ENCODE measurements at regions of chr15 and their contacts with region 1.

Region 1: DNA sequence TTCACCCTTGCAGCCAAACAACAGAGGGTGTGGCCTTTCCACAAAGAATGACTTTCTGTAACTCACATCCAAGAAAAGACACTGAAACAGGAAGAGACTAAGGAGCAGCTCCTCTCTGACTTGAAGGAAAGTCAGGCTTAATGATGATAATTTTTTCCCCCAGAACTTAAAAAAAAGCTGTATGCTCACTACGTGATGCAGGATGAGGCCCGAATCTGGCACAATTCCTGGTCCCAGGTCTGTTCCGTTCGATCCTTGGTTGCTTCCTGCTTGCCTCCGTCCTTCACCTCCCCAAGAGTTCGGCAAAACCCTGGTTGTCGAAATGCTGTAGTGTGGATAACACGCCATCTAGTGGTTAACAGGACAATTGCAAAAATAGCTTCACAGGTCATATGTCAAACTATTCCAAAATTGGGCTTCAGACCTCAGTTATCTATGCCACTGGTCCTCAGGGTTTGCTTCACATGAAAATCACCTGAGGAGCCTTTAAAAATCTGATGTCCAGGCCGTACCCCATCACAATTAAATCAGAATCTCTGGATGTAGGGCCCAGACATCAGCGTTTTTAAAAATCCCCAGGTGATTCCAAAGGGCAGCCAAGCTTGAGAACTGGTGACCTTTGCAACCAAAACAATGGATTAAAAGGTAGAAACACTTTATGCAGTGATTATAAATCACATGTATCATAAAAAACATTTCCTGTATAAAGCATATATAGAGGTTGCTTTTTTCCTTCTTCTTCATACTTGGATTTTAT is 28.1 kb upstream of the SYNM start:
- DNase-seq: no peak
- H3K4me3 ChIP-seq: peak overlapping the region in 3 of 4 donors; percentile 33 to 53 (median 38)
- H3K27ac ChIP-seq: peak overlapping the region in 2 of 4 donors; percentile 61 to 71
- H3K4me1 ChIP-seq: peaks cover 0 to 8% (median 0%) of the 10 kb centered on the region in 3 donors
- H3K27me3 ChIP-seq: no peaks in the 10 kb centered on the region
- CTCF ChIP-seq: peak; percentile 72 to 92 (median 86)
- POLR2A ChIP-seq: no peak

Region 2: GRCh38 chr15:98518823-98519561 is 557.7 kb before region 1 on chr15:
- intact Hi-C with region 1: loop called (anchors 10 kb)
- DNase-seq: no peak
- H3K4me3 ChIP-seq: no peak overlapping the region
- H3K27ac ChIP-seq: no peak overlapping the region
- H3K4me1 ChIP-seq: peaks cover 0 to 8% (median 0%) of the 10 kb centered on the region in 3 donors
- H3K27me3 ChIP-seq: no peaks in the 10 kb centered on the region
- CTCF ChIP-seq: peak; percentile 70 to 90 (median 80)
- POLR2A ChIP-seq: no peak

Region 3: DNA sequence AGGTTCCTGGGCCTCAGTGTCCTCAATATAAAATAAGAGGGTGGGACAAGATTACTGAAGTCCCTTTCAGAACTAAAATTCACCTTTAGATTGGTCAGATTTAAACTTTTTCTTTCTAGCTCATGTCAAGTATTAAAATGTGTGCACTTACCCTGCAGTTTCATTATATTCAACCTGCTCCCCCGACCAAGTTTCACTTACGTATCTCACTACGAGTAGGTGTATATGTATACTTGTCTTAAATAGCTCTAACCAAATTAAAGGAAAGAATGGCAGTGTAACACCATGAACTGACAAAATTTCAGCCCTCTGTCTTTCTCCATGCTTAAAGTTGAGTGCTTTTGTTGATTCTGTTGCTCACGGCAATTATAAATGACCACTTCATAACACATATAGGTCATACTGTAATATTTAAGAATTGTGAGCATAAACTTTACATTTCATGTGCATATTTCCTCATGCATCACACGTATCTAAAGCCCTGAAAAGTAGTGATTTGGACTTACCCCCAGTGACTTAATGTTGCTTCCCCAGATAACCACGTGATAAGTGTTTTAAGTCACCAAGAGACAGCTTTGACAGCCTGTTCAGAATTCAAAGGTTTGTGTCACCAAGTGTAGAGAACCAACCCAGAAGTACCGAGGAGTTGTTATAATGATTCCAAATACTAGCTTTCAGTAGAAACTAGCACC is 139.2 kb before region 1 on chr15:
- intact Hi-C with region 1: no loop called
- DNase-seq: no peak
- H3K4me3 ChIP-seq: no peak overlapping the region
- H3K27ac ChIP-seq: no peak overlapping the region
- H3K4me1 ChIP-seq: peaks cover 0 to 5% (median 0%) of the 10 kb centered on the region in 3 donors
- H3K27me3 ChIP-seq: no peaks in the 10 kb centered on the region
- CTCF ChIP-seq: no peak
- POLR2A ChIP-seq: no peak

Region 4: GRCh38 chr15:99135194-99135593 is 58.5 kb after region 1 on chr15:
- intact Hi-C with region 1: no loop called
- DNase-seq: no peak
- H3K4me3 ChIP-seq: no peak overlapping the region
- H3K27ac ChIP-seq: peak overlapping the region in 3 of 4 donors; percentile 33 to 45 (median 35)
- H3K4me1 ChIP-seq: peaks cover 0 to 14% (median 0%) of the 10 kb centered on the region in 3 donors
- H3K27me3 ChIP-seq: no peaks in the 10 kb centered on the region
- CTCF ChIP-seq: no peak
- POLR2A ChIP-seq: no peak